IMR-90 (cell line): ENCODE measurements at regions of chr6 and their contacts with region 1.

Region 1: DNA sequence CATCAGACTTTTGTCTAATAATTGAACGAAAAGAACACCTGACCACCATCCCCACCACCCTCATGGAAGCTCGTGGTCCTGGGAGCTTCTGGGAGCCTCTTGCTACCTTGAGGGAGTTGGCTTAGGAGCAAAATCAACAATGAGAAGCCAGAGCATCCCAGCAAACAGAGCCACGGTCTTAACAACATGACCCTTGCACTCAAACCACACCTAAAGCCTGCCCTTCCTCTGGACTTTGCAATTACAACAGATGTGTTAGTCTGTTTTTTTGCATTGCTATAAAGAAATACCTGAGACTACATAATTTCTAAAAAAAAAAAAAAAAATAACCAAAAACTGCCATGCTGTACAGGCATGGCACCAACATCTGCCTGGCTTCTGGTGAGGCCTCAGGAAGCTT is 9.5 kb upstream of the RBM24 start:
- DNase-seq: no peak
- ATAC-seq: no peak
- H3K4me3 ChIP-seq: no peak overlapping the region
- H3K27ac ChIP-seq: no peak overlapping the region
- H3K4me1 ChIP-seq: peaks cover 12% of the 10 kb centered on the region; the same call in 1 of the 2 replicates
- H3K27me3 ChIP-seq: no peaks in the 10 kb centered on the region
- CTCF ChIP-seq: no peak
- POLR2A ChIP-seq: no peak
- RAD21 ChIP-seq: no peak

Region 2: GRCh38 chr6:17291778-17292177 is 20.1 kb after region 1 on chr6:
- CTCF ChIA-PET with region 1: no interaction called
- POLR2A ChIA-PET with region 1: interaction called, 10 read pairs
- dilution Hi-C with region 1: no loop called
- in situ Hi-C with region 1: no loop called
- intact Hi-C with region 1: no loop called
- DNase-seq: peak; percentile 38
- ATAC-seq: no peak
- H3K4me3 ChIP-seq: no peak overlapping the region
- H3K27ac ChIP-seq: no peak overlapping the region
- H3K4me1 ChIP-seq: no peaks in the 10 kb centered on the region
- H3K27me3 ChIP-seq: no peaks in the 10 kb centered on the region
- CTCF ChIP-seq: no peak
- POLR2A ChIP-seq: no peak
- RAD21 ChIP-seq: no peak